ENCODE measurements at regions of chr19 and their contacts with region 1.

Region 1: DNA sequence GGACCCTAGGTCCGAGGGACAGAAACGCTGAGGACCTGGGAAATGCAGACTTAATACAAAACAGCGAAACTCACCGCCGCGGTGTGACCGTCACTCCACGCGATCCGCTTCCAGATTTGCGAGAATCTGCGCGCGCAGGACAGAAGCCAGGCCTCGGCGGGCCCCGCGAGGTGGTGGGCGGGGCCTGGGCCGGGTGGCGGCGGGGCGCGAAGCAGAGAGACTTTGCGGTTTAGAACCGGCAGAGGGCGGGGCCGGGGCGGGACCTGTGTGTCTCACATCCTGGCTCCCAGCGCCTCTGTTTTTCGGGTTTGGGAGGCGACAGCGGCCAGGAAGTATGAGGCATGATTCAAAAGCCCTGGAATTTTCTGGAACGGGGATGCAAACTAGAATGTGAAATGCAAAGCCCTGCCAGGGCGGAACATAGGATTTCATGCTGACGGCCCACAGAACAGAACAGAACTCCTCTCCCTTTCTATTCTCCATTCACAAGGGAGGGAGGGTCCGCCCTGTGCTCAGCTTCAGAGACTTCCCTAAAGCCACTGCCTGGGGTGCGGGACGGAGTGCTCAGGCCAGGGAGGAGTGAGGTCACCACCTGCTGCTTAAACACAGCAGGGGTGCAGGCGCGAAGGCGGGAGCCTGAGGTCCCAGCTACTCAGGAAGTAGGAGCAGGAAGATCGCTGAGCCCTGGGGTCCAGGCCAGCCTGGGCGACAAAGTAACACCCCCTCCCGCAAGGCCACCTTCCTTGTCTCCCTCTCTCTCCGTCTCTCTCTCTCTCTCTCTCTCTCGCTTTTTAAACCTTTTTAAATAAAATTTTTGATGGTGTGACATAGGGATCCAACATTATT is 44.3 kb downstream of the ZNF611 start:
- DNase-seq: peak; percentile 95
- H3K4me3 ChIP-seq: peak overlapping the region; percentile 40 to 53
- H3K27ac ChIP-seq: peak overlapping the region; percentile 92 to 93
- H3K4me1 ChIP-seq: no peaks in the 10 kb centered on the region
- H3K27me3 ChIP-seq: no peaks in the 10 kb centered on the region
- CTCF ChIP-seq: peak in 3 of 4 experiments; percentile 18 to 60 (median 58)
- POLR2A ChIP-seq: peak; percentile 97

Region 2: DNA sequence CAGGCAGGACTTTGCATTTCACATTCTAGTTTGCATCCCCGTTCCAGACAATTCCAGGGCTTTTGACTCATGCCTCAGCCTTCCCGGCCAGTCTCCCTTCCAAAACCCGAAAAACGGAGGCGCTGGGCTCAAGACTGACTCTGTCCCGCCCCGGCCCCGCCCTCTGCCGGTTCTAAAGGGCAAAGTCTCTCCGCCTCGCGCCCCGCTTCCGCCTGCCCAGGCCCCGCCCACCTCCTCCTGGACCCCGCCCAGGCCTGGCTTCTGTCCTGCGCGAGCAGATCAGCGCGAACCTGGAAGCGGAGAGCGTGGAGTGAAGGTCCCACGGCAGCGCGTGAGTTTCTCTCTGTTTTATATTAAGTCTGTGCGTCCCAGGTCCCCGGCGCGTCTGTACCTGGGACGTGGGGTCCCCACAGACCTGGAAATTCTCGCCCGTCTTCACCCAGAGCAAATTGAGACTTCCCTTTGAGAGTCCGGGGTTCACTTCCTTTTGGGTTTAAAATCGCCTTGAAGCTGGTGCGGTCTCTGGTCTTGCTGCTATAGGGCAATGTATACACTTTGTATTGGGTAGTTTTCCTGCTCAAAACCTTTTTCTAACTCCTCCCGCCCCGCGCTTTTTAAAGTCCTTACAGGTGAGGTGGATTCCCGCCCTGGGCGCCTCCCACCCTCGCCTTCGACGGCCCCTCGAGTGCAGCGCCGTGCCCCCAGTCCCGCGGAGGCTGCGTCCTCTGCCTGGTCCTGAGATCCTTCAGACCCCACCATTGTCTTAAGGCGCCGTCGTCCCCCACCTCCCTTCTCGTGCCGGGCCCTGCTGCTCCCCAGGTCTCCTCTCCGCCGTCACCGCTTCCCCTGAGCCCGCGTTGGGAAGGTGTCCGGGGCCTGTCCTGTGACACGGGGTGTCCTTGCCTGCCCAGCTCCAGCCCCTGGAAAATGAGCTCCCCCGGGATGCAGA is 89.3 kb before region 1 on chr19:
- intact Hi-C with region 1: loop called (anchors 5 kb)
- DNase-seq: peak; percentile 93
- H3K4me3 ChIP-seq: peak overlapping the region; percentile 44 to 56
- H3K27ac ChIP-seq: peak overlapping the region; percentile 67 to 75
- H3K4me1 ChIP-seq: no peaks in the 10 kb centered on the region
- H3K27me3 ChIP-seq: no peaks in the 10 kb centered on the region
- CTCF ChIP-seq: peak in 3 of 4 experiments; percentile 27 to 48 (median 36)
- POLR2A ChIP-seq: peak; percentile 72

Region 3: DNA sequence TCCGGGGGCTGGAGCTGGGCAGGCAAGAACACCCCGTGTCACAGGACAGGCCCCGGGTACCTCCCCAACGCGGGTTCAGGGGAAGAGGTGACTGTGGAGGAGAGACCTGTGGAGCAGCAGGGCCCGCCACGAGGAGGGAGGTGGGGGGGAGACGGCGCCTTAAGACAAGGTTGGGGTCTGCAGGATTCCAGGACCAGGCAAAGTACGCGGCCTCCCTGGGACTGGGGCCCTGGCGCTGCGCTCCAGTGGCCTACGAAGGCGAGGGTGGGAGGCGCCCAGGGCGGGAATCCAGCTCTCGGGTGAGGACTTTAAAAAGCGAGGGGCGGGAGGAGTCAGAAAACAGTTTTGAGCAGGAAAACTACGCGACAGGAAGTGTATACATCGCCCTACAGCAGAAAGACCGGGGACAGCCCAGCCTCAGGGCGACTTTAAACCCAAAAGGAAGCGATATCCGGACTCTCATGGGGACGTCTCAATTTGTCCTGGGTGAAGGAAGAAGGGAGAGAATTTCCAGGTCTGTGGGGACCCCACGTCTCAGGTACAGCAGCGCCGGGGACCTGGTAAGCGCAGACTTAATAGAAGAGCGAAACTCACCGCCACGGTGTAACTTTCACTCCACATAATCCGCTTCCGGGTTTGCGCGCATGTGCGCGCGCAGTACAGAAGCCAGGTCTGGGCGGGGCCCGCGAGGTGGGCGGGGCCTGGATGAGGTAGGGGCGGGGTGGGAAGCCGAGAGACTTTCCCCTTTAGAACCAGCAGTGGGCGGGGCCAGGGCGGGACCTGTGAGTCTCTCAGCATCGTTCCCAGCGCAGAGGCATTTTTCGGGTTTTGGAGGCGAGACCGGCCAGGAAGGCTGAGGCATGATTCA is 52.6 kb before region 1 on chr19 and contains the start of gene ZNF83:
- intact Hi-C with region 1: loop called (anchors 5 kb)
- DNase-seq: peak; percentile 98
- H3K4me3 ChIP-seq: peak within 1 kb of the TSS; percentile 47 to 71
- H3K27ac ChIP-seq: peak within 1 kb of the TSS; percentile 78 to 86
- H3K4me1 ChIP-seq: no peaks in the 10 kb centered on the region
- H3K27me3 ChIP-seq: no peaks in the 10 kb centered on the region
- CTCF ChIP-seq: no peak
- POLR2A ChIP-seq: peak; percentile 60
- total RNA-seq, gene ZNF83: 36.3 to 62.1 TPM

Region 4: DNA sequence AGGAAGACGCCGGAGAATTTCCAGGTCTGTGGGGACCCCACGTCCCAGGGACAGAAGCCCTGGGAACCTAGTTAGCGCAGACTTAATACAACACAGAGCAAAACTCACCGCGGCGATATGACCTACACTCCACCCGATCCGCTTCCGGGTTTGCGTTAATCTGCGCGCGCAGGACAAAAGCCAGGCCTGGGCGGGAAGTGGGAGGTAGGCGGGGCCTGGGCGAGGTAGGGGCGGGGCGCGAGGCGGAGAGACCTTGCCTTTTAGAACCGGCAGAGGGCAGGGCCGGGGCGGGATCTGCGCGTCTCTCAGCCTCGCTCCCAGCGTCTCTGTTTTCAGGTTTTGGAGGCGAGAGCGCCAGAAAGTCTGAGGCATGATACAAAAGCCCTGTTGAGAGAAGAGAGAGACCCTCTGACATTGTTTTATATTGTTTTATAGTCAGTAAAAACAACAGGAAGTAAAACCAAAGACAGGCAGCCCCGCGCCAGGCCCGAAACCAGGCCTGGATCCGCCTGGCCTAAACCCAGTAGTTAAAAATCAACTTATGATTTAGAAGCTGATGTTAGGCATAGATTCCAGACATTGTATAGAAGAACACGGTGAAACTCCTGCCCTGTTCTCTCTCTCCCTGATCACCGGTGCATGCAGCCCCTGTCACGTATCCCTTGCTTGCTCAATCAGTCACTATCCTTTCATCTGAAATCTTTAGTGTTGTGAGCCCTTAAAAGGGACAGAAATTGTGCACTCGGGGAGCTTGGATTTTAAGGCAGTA is 44.5 kb after region 1 on chr19 and contains the start of gene ZNF611:
- intact Hi-C with region 1: loop called (anchors 2 kb)
- DNase-seq: peak; percentile 98
- H3K4me3 ChIP-seq: peak within 1 kb of the TSS; percentile 55 to 82
- H3K27ac ChIP-seq: peak within 1 kb of the TSS; percentile 79 to 91
- H3K4me1 ChIP-seq: no peaks in the 10 kb centered on the region
- H3K27me3 ChIP-seq: no peaks in the 10 kb centered on the region
- CTCF ChIP-seq: peak in 3 of 4 experiments; percentile 54 to 91 (median 89)
- POLR2A ChIP-seq: peak; percentile 94
- total RNA-seq, gene ZNF611: 12.0 to 15.3 TPM